Esophagus muscularis mucosa (tissue), 4 donors: ENCODE measurements at regions of chr15 and their contacts with region 1.

Region 1: DNA sequence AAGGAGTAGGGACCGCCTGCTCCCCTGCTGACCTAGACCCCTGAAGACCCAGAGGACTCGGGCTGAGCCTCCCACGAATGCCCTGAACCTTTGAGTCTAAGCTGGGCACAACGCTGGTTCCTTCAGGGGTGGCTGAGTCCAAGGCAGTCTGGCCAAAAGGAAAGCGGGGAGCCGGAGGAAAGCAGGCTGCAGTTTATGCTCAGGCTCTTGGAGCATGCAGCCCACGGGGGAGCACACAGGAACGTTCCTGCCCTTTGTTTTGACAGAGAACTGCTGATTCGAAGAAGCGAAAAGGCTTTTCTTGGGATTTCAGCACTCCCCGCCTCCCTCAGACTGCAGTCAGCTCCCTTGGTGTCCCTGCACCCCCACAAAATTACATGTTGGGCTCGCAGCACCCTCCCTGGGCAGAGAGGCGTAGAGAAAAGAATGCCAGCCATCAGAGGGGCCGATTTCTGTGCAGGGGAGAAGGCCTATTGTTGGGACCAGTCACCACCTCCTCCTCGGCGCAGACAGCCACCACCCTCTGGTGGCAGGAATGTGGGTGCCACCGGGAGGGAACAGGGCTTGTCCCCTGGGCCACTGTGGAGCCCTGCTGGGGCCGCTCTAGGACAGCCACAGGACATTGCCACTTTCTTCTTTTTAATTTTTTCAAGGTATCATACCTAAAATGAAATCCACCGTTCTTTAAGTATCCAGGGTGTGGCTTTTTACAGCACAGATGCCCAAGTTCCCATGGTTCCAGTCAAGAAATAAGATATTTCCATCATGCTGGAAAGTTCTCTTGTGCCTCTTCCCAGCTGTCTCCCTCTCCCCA is 72.2 kb downstream of the SMAD6 start:
- DNase-seq: peak; percentile 95
- H3K4me3 ChIP-seq: peak overlapping the region in 1 of 4 donors; percentile 23
- H3K27ac ChIP-seq: peak overlapping the region; percentile 65 to 81 (median 75)
- H3K4me1 ChIP-seq: peaks cover 36 to 58% (median 48%) of the 10 kb centered on the region in 4 donors
- H3K27me3 ChIP-seq: no peaks in the 10 kb centered on the region
- CTCF ChIP-seq: peak; percentile 98
- EP300 ChIP-seq: no peak
- POLR2A ChIP-seq: no peak

Region 2: DNA sequence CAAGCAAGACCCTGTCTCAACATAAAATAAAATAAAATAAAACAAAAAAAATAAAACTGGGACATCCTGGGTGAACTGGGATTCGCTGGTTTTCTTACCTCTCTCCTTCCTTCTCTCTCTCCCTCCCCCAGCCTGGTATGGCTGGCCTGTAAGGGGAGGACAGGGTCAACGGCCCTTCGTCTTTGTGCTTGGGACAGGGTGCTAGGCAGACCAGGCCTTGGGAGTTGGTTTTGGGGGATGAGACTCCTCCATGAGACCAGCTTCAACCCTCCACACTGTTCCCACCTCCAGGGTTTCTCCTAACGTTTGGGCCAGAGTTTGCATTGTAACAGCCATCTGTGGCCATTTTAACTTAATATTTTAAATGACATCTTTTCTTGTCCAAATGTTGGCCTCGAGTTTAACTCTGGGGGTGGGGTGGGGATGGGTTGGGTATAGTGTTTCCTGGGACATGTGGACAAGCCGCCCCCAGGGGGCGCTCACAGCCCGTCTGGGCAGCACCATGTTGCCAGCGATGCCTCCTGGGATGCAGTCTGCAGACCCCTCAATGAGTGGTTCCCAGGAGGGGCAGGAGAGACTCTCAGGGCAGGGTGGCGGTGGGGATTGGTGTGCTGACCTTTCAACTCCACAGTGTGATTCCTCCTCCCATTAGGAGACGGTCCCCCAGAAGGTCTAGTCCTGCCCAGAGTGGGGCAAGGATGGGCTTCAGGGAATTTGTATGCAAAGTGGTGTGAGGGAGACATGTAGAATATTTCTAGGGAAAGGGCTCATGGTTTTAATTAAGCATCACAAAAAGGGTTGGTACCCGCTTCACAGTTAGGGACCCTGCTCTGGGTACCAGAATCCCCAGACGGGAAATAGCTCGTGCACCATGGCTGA is 170.7 kb before region 1 on chr15:
- intact Hi-C with region 1: loop called (anchors 5 kb)
- DNase-seq: no peak
- H3K4me3 ChIP-seq: no peak overlapping the region
- H3K27ac ChIP-seq: no peak overlapping the region
- H3K4me1 ChIP-seq: no peaks in the 10 kb centered on the region
- H3K27me3 ChIP-seq: no peaks in the 10 kb centered on the region
- CTCF ChIP-seq: peak; percentile 72 to 80 (median 73)
- EP300 ChIP-seq: no peak
- POLR2A ChIP-seq: no peak

Region 3: DNA sequence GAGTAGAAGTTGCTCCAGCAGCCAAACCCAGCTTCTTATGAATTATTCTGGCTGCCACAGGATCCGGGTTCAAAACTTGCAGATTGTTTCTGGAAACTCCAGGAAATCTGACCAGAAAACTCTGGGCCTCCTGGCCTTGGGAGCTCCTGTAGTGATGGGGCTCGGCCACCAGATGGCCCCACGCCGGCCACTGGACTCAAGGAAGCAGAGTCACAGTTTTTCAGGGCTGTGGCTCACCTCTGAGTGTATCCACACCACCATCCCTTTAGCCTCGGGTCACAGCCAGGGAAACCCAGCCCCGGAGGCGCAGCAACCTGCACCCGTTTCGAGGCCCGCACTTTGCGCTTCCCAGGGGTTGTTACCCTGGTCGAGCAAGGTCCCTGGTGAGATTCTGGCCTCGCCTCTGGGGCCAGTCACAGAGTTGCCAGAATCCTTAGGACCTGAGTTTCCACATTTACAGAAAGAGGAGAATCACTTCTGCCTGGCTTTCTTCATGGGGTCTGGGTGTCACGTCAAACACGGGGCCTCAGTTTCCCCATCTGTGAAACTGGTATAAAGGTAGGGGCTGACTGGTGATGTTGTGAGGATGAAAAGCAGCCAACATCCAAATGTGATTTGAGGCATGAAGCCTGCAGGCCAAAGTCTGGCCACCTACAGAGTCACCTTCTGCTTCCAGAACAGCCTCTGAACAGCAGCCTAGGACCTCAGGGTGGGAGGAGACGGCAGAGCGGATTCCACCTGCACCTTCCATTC is 154.9 kb before region 1 on chr15:
- intact Hi-C with region 1: loop called (anchors 5 kb)
- DNase-seq: no peak
- H3K4me3 ChIP-seq: no peak overlapping the region
- H3K27ac ChIP-seq: peak overlapping the region in 2 of 4 donors; percentile 30 to 67
- H3K4me1 ChIP-seq: peaks cover 53 to 56% (median 55%) of the 10 kb centered on the region in 4 donors
- H3K27me3 ChIP-seq: peaks cover 0 to 17% (median 2%) of the 10 kb centered on the region in 4 donors
- CTCF ChIP-seq: peak; percentile 90 to 98 (median 90)
- EP300 ChIP-seq: no peak
- POLR2A ChIP-seq: no peak

Region 4: DNA sequence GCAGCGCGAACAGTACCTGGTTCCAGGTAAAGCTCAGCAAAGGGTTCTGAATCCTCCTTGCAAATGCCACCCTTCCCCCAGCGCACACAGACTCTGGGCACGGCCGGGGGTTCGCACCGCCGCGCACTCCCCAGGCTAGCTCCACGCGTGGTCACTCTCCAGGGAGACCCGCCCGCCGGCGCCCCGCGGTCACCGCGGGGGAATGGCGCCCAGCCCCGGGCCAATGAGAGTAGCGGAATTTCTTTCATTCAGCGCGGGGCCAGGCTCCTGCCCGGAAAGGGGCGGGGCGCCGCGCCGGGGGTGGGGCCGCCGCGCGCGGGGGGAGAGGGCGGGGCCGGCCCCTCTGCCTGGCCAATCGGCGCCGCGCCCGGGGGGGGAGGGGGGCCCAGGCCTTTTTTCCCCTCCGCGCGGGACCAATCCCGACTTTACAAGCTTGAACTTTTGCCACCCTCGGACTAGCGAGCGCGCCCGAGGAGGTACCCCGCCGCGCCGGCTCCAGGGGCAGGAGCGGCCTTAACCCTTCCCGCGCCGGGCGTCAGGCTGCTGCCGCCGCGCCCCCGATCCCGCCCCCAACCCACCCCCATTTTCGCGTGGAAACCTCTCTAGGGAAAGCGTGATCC is 73.3 kb before region 1 on chr15:
- intact Hi-C with region 1: loop called (anchors 2 kb)
- DNase-seq: peak; percentile 98
- H3K4me3 ChIP-seq: peak overlapping the region; percentile 66 to 86 (median 74)
- H3K27ac ChIP-seq: peak overlapping the region; percentile 84 to 92 (median 88)
- H3K4me1 ChIP-seq: peaks cover 20 to 56% (median 42%) of the 10 kb centered on the region in 4 donors
- H3K27me3 ChIP-seq: no peaks in the 10 kb centered on the region
- CTCF ChIP-seq: peak in 1 of 3 experiments; percentile 6
- EP300 ChIP-seq: no peak
- POLR2A ChIP-seq: no peak

Region 5: DNA sequence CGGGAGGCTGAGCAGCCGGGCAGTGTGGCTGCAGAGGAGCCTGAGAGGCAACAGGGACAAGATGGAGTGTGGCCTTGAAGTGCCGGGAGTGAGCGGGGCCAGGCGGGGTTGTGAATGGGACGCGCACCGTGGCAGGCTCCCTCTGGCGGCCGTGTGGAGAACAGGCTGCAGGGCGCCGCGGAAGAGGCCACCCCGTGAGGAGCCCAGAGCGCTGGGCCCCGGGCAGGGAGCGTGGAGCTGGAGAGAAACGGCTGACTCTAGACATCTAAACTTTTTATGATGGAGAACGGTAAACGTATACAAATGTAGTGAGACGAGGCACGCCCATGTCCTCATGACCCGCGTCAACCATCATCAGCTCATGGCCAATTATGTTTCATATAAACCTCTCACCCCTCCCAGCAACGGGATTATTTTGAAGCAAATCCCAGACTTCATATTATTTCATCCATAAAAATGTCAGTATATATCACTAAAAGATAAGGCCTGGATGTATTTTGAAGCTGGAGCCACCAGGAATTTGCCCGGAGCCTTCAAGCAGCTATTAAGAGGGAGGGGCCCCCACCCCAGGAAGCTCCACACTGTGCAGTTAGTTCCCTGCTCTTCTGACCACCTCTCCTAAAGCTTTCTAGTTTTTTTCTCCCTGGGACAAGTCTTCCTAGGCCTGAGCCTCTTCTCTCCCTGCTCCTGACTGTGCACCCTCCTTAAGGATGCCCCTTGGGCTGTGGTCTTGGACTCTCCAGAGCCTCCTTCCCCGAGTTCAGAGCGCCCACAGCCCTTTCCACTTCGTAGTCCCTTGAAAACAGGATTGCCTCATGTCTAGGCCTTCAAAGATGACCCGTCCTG is 77.2 kb after region 1 on chr15:
- intact Hi-C with region 1: loop called (anchors 5 kb)
- DNase-seq: peak; percentile 97
- H3K4me3 ChIP-seq: peak overlapping the region in 1 of 4 donors; percentile 19
- H3K27ac ChIP-seq: peak overlapping the region; percentile 29 to 63 (median 52)
- H3K4me1 ChIP-seq: peaks cover 23 to 30% (median 27%) of the 10 kb centered on the region in 4 donors
- H3K27me3 ChIP-seq: no peaks in the 10 kb centered on the region
- CTCF ChIP-seq: peak in 2 of 3 experiments; percentile 94 to 95
- EP300 ChIP-seq: no peak
- POLR2A ChIP-seq: no peak